HEK293 (cell line): ENCODE measurements at regions of chr1 and their contacts with region 1.

Region 1: GRCh38 chr1:150010393-150011115 is at the start of gene OTUD7B:
- H3K4me3 ChIP-seq: peak within 1 kb of the TSS; percentile 88
- H3K27ac ChIP-seq: peak within 1 kb of the TSS; percentile 84
- H3K4me1 ChIP-seq: peaks cover 5% of the 10 kb centered on the region
- CTCF ChIP-seq: peak; percentile 66; the same call in 1 of the 2 replicates

Region 2: DNA sequence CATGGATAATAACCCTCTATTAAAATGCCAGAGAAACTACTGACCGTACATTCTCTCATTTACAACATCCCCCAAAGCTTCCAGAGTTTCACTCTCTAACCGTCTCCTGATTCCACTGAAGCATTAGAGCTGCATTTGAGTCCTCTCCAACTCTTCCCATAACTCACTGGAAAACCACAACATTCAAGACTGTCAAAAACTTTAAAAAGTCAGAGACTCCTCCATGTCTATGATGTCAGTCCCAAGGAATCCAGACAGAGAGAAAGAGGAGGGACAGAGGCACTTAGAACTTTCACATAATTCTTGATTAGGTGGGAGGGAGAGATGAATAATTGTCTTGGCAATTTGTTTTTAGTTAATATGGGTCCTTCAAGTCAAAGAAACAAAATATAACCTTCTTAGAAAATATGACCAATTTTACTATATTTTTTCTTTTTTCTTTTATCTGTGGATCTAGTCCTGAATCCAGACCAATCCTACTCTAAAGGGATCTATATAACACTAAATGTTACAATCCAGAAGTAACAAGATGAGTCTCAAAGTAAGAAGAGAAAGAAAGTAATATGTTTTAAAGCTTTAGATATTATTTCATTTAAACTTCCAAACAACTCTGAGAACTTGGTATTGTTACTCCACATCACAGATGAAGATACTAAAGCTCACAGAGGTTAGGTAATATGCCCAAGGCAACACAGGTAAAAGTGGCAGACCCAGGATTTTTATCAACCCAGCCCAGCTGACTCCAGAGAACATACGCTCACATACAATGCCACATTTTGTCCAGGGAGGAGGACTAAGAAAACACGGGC is 23.9 kb before region 1 on chr1:
- CTCF ChIA-PET with region 1: interaction called, 3 read pairs
- POLR2A ChIA-PET with region 1: interaction called, 17 read pairs
- H3K4me3 ChIP-seq: no peak overlapping the region
- H3K27ac ChIP-seq: no peak overlapping the region
- H3K4me1 ChIP-seq: peaks cover 8% of the 10 kb centered on the region; the same call in 1 of the 2 replicates
- CTCF ChIP-seq: no peak

Region 3: DNA sequence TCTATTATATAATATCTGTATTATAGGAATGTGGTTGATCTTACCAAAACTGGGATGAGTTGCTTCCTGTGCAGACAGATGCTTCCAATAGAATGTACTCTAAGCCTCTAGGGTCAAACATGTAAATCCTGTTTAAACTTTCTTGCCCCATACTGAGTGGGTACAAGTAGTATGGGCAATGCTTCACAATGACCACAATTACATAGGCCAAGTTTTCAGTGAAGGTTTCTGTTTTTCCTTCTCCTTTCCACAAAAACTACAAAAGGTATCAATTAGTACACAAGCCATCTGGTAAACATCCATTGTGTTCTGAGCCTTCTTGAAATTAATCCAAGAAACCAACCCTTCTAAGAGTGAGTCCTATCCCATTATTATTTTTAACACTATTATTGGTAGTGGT is 16.8 kb before region 1 on chr1:
- CTCF ChIA-PET with region 1: interaction called, 4 read pairs
- POLR2A ChIA-PET with region 1: interaction called, 10 read pairs
- H3K4me3 ChIP-seq: no peak overlapping the region
- H3K27ac ChIP-seq: no peak overlapping the region
- H3K4me1 ChIP-seq: peaks cover 2% of the 10 kb centered on the region; the same call in 1 of the 2 replicates
- CTCF ChIP-seq: no peak

Region 4: GRCh38 chr1:150121236-150121862 is 110.8 kb after region 1 on chr1:
- CTCF ChIA-PET with region 1: no interaction called
- POLR2A ChIA-PET with region 1: no interaction called
- H3K4me3 ChIP-seq: no peak overlapping the region
- H3K27ac ChIP-seq: no peak overlapping the region
- H3K4me1 ChIP-seq: no peaks in the 10 kb centered on the region
- CTCF ChIP-seq: no peak